GM12878 (cell line): ENCODE measurements at regions of chr2 and their contacts with region 1.

Region 1: GRCh38 chr2:118003396-118003824 is 10.5 kb downstream of the CCDC93 start:
- DNase-seq: peak; percentile 48
- ATAC-seq: peak; percentile 99
- H3K4me3 ChIP-seq: no peak overlapping the region
- H3K27ac ChIP-seq: no peak overlapping the region
- H3K4me1 ChIP-seq: no peaks in the 10 kb centered on the region; the same call in 1 of the 2 replicates
- H3K27me3 ChIP-seq: no peaks in the 10 kb centered on the region
- CTCF ChIP-seq: peak; percentile 72 to 89 (median 88)
- EP300 ChIP-seq: no peak
- POLR2A ChIP-seq: no peak
- RAD21 ChIP-seq: peak; percentile 78

Region 2: GRCh38 chr2:117785740-117786139 is 217.7 kb before region 1 on chr2:
- CTCF ChIA-PET with region 1: interaction called, 13 read pairs
- POLR2A ChIA-PET with region 1: no interaction called
- RAD21 ChIA-PET with region 1: interaction called, 4 read pairs
- SMC1A ChIA-PET with region 1: interaction called, 5 read pairs
- in situ Hi-C with region 1: no loop called
- intact Hi-C with region 1: no loop called
- DNase-seq: no peak
- ATAC-seq: peak; percentile 80
- H3K4me3 ChIP-seq: no peak overlapping the region
- H3K27ac ChIP-seq: no peak overlapping the region
- H3K4me1 ChIP-seq: no peaks in the 10 kb centered on the region
- H3K27me3 ChIP-seq: no peaks in the 10 kb centered on the region
- CTCF ChIP-seq: peak; percentile 56 to 67 (median 62)
- EP300 ChIP-seq: no peak
- POLR2A ChIP-seq: no peak
- RAD21 ChIP-seq: peak; percentile 76

Region 3: GRCh38 chr2:117835990-117836760 is 167.2 kb before region 1 on chr2:
- CTCF ChIA-PET with region 1: interaction called, 12 read pairs
- POLR2A ChIA-PET with region 1: no interaction called
- RAD21 ChIA-PET with region 1: no interaction called
- SMC1A ChIA-PET with region 1: interaction called, 4 read pairs
- in situ Hi-C with region 1: no loop called
- intact Hi-C with region 1: no loop called
- DNase-seq: no peak
- ATAC-seq: peak; percentile 82
- H3K4me3 ChIP-seq: no peak overlapping the region
- H3K27ac ChIP-seq: no peak overlapping the region
- H3K4me1 ChIP-seq: no peaks in the 10 kb centered on the region
- H3K27me3 ChIP-seq: no peaks in the 10 kb centered on the region
- CTCF ChIP-seq: peak; percentile 50 to 64 (median 55)
- EP300 ChIP-seq: no peak
- POLR2A ChIP-seq: peak; percentile 37
- RAD21 ChIP-seq: peak; percentile 46

Region 4: DNA sequence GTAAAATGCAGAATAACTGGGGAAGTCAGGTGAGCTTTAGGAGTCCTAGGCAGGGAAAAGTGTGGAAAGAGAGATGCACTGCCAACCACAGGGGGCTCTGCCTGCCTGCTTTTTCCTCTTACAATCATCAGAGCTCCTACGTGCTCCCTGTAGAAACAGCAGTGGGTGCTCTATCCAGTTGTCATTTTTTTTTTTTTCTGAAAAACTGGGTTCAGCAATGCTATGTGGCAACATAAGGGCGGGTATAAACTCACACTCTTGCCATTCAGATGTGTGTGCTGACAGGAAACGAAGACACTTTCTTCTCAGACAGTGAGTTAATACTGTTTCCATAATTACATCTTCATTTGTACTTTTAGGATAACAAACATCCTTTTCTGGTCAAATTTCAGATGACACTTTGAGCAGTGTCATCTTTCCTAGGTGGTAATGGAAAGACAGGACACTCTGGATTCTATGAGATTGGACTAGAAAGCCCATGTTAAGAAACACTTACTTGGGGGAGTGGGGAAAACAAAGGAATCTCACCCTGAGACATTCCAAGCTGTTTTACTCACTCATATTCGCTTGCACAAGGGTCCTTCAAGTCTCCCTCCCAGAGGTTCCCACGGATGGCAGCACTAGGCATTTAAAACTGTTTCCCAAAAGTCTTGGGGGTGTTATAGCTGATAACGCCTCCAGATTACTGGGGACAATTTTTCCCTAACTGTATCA is 30.8 kb before region 1 on chr2:
- CTCF ChIA-PET with region 1: interaction called, 19 read pairs
- POLR2A ChIA-PET with region 1: no interaction called
- RAD21 ChIA-PET with region 1: interaction called, 8 read pairs
- SMC1A ChIA-PET with region 1: interaction called, 4 read pairs
- in situ Hi-C with region 1: no loop called
- intact Hi-C with region 1: no loop called
- DNase-seq: no peak
- ATAC-seq: no peak
- H3K4me3 ChIP-seq: no peak overlapping the region
- H3K27ac ChIP-seq: no peak overlapping the region
- H3K4me1 ChIP-seq: no peaks in the 10 kb centered on the region
- H3K27me3 ChIP-seq: no peaks in the 10 kb centered on the region
- CTCF ChIP-seq: no peak
- EP300 ChIP-seq: no peak
- POLR2A ChIP-seq: no peak
- RAD21 ChIP-seq: no peak

Region 5: GRCh38 chr2:118013724-118014491 is 10.5 kb after region 1 on chr2 and contains the start of gene CCDC93:
- CTCF ChIA-PET with region 1: interaction called, 49 read pairs
- POLR2A ChIA-PET with region 1: interaction called, 4 read pairs
- RAD21 ChIA-PET with region 1: interaction called, 21 read pairs
- SMC1A ChIA-PET with region 1: interaction called, 13 read pairs
- in situ Hi-C with region 1: no loop called
- intact Hi-C with region 1: no loop called
- DNase-seq: peak; percentile 50
- ATAC-seq: peak; percentile 94
- H3K4me3 ChIP-seq: peak within 1 kb of the TSS; percentile 86
- H3K27ac ChIP-seq: peak within 1 kb of the TSS; percentile 87
- H3K4me1 ChIP-seq: peaks cover 5% of the 10 kb centered on the region
- H3K27me3 ChIP-seq: no peaks in the 10 kb centered on the region
- CTCF ChIP-seq: no peak
- EP300 ChIP-seq: no peak
- POLR2A ChIP-seq: peak; percentile 84
- RAD21 ChIP-seq: no peak
- polyA plus RNA-seq, gene CCDC93: 3.6 to 4.0 TPM